ENCODE measurements at regions of chr20 and their contacts with region 1.

Region 1: GRCh38 chr20:19692685-19693119 is 65.4 kb upstream of the RIN2 start:
- DNase-seq: peak; percentile 40
- H3K4me3 ChIP-seq: no peak overlapping the region
- H3K27ac ChIP-seq: no peak overlapping the region
- H3K4me1 ChIP-seq: no peaks in the 10 kb centered on the region
- CTCF ChIP-seq: peak; percentile 94

Region 2: DNA sequence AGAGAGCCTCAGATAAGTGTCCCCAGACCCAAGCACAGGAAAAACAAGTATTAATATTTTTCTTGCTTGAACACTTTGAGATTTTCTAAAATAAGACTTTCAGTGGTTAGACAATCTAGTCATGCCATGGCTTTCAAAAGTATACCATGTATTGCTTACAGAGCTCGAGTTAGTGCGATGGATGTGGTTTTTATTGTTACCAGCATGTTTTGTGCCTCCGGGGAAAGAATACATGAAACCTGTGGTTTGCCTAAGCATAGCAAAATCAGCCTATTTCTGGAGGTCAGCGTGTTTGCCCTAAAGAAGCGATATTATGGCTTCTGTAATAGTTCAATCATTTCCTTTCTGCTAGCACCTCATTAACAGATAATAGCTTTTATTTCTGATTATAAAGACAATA is 86.9 kb after region 1 on chr20:
- CTCF ChIA-PET with region 1: no interaction called
- POLR2A ChIA-PET with region 1: no interaction called
- intact Hi-C with region 1: loop called (anchors 2 kb)
- DNase-seq: no peak
- H3K4me3 ChIP-seq: no peak overlapping the region
- H3K27ac ChIP-seq: no peak overlapping the region
- H3K4me1 ChIP-seq: no peaks in the 10 kb centered on the region
- CTCF ChIP-seq: no peak

Region 3: DNA sequence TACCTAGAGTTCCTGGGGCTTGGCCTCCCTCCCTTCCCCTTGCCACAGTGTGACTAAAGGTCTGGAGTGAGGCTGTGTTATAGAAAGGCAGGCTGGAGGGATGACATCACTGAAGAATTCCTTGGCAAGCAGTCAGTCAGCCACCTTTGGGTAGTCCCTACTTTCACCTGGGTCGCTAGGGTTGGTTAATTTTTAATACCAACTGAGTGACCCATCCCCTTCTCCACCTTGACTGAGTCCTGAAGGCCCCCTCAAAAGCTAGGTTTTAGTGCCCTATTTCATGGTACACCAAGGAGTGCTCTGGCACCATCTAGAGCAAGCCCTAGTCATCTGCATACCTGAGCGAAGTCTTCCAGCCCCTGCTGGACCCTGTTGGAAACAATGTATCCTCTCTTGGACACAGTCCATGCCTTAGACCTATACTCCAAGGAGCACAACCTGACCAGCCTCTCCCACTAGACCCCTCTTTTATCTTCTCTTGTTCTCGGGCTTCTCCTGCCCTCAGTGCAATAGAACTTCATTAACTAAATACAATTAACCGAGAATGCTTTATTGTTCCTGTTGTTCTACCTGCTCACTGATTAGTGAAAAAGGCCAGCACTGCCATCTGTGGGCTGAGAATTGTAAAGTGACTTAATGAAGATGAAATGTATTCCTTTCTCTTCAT is 109.9 kb after region 1 on chr20:
- CTCF ChIA-PET with region 1: no interaction called
- POLR2A ChIA-PET with region 1: no interaction called
- intact Hi-C with region 1: loop called (anchors 1 kb)
- DNase-seq: no peak
- H3K4me3 ChIP-seq: no peak overlapping the region
- H3K27ac ChIP-seq: no peak overlapping the region
- H3K4me1 ChIP-seq: no peaks in the 10 kb centered on the region
- CTCF ChIP-seq: peak; percentile 51

Region 4: GRCh38 chr20:19889011-19889953 is 196.6 kb after region 1 on chr20:
- CTCF ChIA-PET with region 1: no interaction called
- POLR2A ChIA-PET with region 1: no interaction called
- intact Hi-C with region 1: loop called (anchors 10 kb)
- DNase-seq: no peak
- H3K4me3 ChIP-seq: no peak overlapping the region
- H3K27ac ChIP-seq: no peak overlapping the region
- H3K4me1 ChIP-seq: no peaks in the 10 kb centered on the region
- CTCF ChIP-seq: no peak

Region 5: DNA sequence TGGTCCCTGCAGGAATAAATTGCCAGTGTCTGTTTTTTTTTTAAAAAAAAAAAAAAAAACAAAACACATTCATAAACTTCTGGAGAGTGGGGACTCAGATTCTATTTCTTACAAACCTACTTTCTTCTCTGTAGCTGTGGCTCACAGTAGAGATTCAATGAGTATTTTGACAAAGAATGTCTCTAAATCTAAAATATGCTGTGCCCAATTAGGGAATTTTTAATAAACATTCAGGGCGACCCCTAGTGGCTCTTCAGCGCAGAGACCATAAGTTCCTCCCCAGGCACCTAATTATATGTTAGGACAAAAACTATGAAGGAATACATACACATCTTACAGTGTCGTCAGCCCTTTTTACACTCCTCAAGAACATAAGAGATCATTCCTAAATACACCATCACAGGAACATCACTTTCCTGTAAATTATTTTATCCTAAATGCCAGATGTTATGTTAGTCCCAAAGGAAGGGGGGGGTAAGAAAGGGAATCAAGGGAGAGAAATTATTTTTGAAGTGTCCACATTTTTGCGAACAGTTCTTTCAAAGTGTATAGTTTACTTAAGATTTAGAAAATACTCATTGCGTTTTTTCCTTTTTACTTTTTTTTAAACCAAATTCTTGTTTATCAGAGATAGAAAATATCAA is 302.6 kb after region 1 on chr20:
- CTCF ChIA-PET with region 1: no interaction called
- POLR2A ChIA-PET with region 1: no interaction called
- intact Hi-C with region 1: loop called (anchors 1 kb)
- DNase-seq: peak; percentile 57
- H3K4me3 ChIP-seq: no peak overlapping the region
- H3K27ac ChIP-seq: no peak overlapping the region
- H3K4me1 ChIP-seq: no peaks in the 10 kb centered on the region
- CTCF ChIP-seq: peak; percentile 94